Heart left ventricle (tissue), 16 donors: ENCODE measurements at regions of chr6 and their contacts with region 1.

Region 1: DNA sequence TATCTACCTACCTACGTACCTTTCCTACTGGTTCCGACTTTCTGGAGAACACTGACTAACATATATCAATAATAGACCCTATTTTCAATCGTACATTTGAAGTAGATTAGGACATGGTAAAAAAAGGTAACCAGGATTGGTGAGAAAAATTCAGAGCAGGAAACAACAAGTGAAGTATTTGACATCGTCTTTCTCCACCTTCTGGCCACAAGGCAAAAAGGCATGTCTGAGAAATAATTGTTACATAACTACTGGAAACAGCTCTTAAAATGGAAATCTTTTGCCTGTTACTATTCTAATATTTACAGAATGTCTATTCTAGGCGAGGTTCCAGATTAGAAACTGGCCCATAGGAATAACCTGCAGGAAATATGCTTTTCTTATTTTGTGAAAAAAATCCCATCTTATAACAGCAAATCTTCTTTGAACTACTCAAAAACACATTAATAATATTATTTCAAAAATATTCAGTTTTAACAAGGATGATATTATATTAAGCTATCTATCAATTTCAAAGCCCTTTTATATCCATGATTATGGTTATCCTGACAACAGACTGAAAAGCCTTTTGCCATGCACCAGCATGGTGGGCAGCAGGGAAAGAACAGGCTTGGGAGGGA is 80.8 kb downstream of the RCAN2 start:
- DNase-seq: peak in 2 of 5 donors; percentile 16 to 26
- ATAC-seq: peak in 1 of 4 donors; percentile 17
- H3K4me3 ChIP-seq: no peak overlapping the region
- H3K27ac ChIP-seq: peak overlapping the region in 10 of 12 donors; percentile 4 to 63 (median 42)
- H3K4me1 ChIP-seq: peaks cover 3 to 69% (median 40%) of the 10 kb centered on the region in 12 donors
- H3K27me3 ChIP-seq: no peaks in the 10 kb centered on the region
- CTCF ChIP-seq: peak; percentile 57 to 91 (median 78)
- POLR2A ChIP-seq: no peak

Region 2: DNA sequence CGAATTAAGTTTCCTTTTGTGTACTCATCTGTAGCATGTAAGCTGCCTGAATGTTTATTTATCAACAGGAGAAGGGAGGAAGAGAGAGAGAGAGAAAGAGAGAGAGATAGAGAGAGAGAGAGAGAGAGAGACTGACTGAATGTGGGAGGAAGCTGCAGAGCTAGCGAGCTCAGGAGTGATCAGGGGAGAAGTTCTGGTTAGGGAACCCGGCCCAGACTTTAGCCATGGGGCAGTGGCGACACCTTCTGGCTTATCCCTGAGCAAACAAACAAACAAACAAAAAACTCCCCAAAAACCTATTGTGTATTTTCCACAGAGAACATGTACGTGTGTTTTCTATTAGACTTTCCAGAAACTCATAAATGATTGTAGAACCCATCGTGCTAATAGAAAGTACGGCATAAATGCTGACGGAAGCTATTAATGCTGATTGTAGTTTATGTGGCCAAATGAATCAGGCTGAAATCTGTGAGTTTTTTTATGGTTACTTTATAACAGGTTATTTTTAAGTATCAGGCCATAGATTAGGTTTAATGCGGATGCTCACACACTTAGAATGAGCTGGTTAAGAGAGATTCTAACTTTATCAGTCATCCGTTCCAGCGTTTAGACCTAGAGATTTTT is 487.6 kb before region 1 on chr6:
- intact Hi-C with region 1: loop called in 2 of 10 experiments (anchors 5 to 10 kb)
- DNase-seq: peak; percentile 58 to 72 (median 62)
- ATAC-seq: peak; percentile 51 to 75 (median 73)
- H3K4me3 ChIP-seq: no peak overlapping the region
- H3K27ac ChIP-seq: peak overlapping the region in 1 of 12 donors; percentile 24
- H3K4me1 ChIP-seq: peaks cover 0 to 58% (median 29%) of the 10 kb centered on the region in 12 donors
- H3K27me3 ChIP-seq: no peaks in the 10 kb centered on the region
- CTCF ChIP-seq: peak; percentile 30 to 71 (median 60)
- POLR2A ChIP-seq: no peak

Region 3: GRCh38 chr6:46042355-46042999 is 368.0 kb before region 1 on chr6:
- intact Hi-C with region 1: loop called in 2 of 10 experiments (anchors 5 kb)
- DNase-seq: peak in 2 of 5 donors; percentile 23 to 29
- ATAC-seq: peak in 3 of 4 donors; percentile 68 to 79 (median 76)
- H3K4me3 ChIP-seq: no peak overlapping the region
- H3K27ac ChIP-seq: peak overlapping the region in 2 of 12 donors; percentile 73 to 74
- H3K4me1 ChIP-seq: peaks cover 0 to 58% (median 37%) of the 10 kb centered on the region in 12 donors
- H3K27me3 ChIP-seq: no peaks in the 10 kb centered on the region
- CTCF ChIP-seq: peak; percentile 43 to 72 (median 56)
- POLR2A ChIP-seq: no peak

Region 4: DNA sequence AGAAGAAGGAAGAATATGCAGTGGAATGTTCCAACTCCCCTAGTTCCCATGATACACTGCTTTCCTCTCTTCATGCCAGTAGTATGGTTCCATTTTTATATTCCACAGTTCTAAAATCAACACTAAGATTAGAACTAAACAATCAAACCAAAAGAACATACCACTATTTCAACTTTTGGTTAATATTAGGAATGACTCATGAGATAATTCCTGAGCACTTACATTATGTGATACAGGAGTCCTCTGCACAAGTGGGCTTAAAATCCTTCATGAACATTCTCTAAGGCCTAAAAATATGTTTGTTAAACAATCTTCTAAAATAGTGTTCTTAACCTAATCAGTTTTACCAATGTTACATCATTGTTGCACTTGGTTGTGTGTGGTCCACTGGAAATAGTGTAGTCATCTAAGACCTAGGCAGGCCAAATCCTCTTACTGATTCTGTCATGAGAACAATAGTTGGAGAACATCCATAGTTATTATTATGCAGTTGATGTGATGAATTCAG is 111.1 kb after region 1 on chr6:
- intact Hi-C with region 1: no loop called
- DNase-seq: no peak
- ATAC-seq: peak; percentile 74 to 92 (median 85)
- H3K4me3 ChIP-seq: no peak overlapping the region
- H3K27ac ChIP-seq: peak overlapping the region; percentile 0 to 78 (median 40)
- H3K4me1 ChIP-seq: peaks cover 0 to 30% (median 11%) of the 10 kb centered on the region in 12 donors
- H3K27me3 ChIP-seq: no peaks in the 10 kb centered on the region
- CTCF ChIP-seq: no peak
- POLR2A ChIP-seq: no peak